ENCODE measurements at regions of chr11 and their contacts with region 1.

Region 1: GRCh38 chr11:33742249-33742851 is 6.1 kb upstream of the CD59 start:
- DNase-seq: no peak
- ATAC-seq: peak; percentile 87
- H3K4me3 ChIP-seq: no peak overlapping the region
- H3K27ac ChIP-seq: no peak overlapping the region
- H3K4me1 ChIP-seq: no peaks in the 10 kb centered on the region
- H3K27me3 ChIP-seq: no peaks in the 10 kb centered on the region
- CTCF ChIP-seq: peak; percentile 21 to 60 (median 38); a peak in 3 of 6 replicates
- EP300 ChIP-seq: no peak
- POLR2A ChIP-seq: no peak
- RAD21 ChIP-seq: 0 out of 2 replicates have a peak, but pooled peaks have one; percentile 40

Region 2: GRCh38 chr11:33362051-33362910 is 380.1 kb before region 1 on chr11:
- CTCF ChIA-PET with region 1: interaction called, 83 read pairs
- POLR2A ChIA-PET with region 1: interaction called, 3 read pairs
- RAD21 ChIA-PET with region 1: interaction called, 50 read pairs
- SMC1A ChIA-PET with region 1: interaction called, 41 read pairs
- in situ Hi-C with region 1: no loop called
- intact Hi-C with region 1: loop called (anchors 2 kb)
- DNase-seq: no peak
- ATAC-seq: peak; percentile 84
- H3K4me3 ChIP-seq: no peak overlapping the region
- H3K27ac ChIP-seq: no peak overlapping the region
- H3K4me1 ChIP-seq: no peaks in the 10 kb centered on the region
- H3K27me3 ChIP-seq: no peaks in the 10 kb centered on the region
- CTCF ChIP-seq: peak; percentile 39 to 63 (median 47); a peak in 4 of 6 replicates
- EP300 ChIP-seq: no peak
- POLR2A ChIP-seq: no peak
- RAD21 ChIP-seq: peak; percentile 76

Region 3: DNA sequence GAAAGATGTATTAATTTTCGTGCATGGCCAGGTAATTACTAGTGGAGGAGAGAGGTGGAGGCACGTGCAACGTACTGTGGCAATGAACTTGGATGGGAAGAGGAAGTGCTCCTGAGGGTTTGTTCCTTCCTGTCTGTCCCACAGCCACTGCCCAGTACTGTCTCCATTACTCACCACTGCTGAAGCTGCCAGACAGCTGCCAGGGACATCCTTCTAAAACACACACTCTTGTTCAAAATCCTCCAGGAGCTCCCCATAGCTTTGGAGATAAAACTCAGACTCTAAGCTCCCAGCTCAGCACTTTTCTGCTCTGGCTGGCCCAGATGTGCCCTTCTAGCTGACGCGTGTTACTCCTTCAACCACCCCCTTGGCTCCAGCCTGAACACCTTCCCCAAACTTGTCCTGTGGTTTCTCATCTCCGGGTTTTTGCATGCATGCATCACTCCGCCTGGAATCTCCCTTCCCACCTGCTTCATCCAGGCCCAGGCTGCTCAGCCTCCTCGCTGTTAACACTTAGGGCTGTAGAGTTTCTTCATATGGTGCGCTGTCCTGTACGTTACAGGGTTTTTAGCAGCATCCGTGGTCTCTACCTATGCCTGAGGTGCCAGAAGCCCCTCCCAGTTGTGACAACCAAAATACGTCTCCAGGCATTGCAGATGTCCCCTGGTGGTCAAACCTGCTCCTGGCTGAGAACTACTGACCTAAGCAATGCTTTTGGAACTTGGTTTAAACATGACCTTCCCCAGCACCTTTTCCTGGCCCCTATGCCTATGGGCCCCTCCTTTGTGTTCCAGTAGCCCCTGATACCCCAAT is 111.2 kb before region 1 on chr11:
- CTCF ChIA-PET with region 1: no interaction called
- POLR2A ChIA-PET with region 1: no interaction called
- RAD21 ChIA-PET with region 1: no interaction called
- SMC1A ChIA-PET with region 1: no interaction called
- in situ Hi-C with region 1: no loop called
- intact Hi-C with region 1: no loop called
- DNase-seq: no peak
- ATAC-seq: no peak
- H3K4me3 ChIP-seq: no peak overlapping the region
- H3K27ac ChIP-seq: no peak overlapping the region
- H3K4me1 ChIP-seq: peaks cover 4% of the 10 kb centered on the region; the same call in 1 of the 2 replicates
- H3K27me3 ChIP-seq: no peaks in the 10 kb centered on the region
- CTCF ChIP-seq: no peak
- EP300 ChIP-seq: no peak
- POLR2A ChIP-seq: no peak
- RAD21 ChIP-seq: no peak

Region 4: DNA sequence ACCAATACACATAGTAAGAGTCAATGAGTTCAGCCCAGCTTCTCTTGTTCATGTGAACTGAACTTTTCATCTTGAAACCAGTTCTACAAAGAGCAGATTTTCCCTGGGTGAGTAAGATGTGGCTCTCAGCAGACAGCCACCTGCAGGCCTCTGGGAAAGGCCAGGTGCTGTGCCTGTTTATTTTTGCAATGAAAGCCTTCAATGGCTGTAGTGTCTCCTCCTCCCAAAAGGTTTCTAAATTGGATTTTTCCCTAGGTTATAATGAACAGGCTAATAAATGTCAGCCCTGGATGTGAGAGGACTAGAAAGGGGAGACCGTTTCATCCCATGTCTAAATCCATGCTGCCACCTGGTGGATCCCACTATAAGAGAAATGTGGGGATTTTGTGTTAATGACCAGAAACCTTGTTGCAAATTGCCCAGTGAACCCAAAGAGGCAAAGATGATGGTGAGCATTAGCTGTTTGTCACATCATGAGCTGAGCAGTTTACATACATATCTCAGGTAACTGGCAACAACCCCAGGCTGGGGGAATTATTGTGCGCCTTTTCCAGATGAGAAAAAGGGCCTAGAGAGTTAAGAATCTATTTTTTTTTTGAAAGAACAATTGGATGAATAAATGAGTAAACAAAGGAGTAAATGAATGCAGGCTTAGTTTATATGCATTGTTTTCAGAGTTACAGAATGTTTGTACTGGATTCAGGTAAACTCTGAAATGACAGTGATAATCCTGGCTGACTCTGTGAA is 54.4 kb before region 1 on chr11:
- CTCF ChIA-PET with region 1: interaction called, 45 read pairs
- POLR2A ChIA-PET with region 1: no interaction called
- RAD21 ChIA-PET with region 1: interaction called, 15 read pairs
- SMC1A ChIA-PET with region 1: interaction called, 30 read pairs
- in situ Hi-C with region 1: no loop called
- intact Hi-C with region 1: no loop called
- DNase-seq: peak; percentile 33
- ATAC-seq: peak; percentile 74
- H3K4me3 ChIP-seq: no peak overlapping the region
- H3K27ac ChIP-seq: no peak overlapping the region; the same call in 1 of the 2 replicates
- H3K4me1 ChIP-seq: peaks cover 3% of the 10 kb centered on the region; the same call in 1 of the 2 replicates
- H3K27me3 ChIP-seq: no peaks in the 10 kb centered on the region
- CTCF ChIP-seq: peak; percentile 60 to 71 (median 62)
- EP300 ChIP-seq: no peak
- POLR2A ChIP-seq: no peak
- RAD21 ChIP-seq: peak; percentile 92

Region 5: DNA sequence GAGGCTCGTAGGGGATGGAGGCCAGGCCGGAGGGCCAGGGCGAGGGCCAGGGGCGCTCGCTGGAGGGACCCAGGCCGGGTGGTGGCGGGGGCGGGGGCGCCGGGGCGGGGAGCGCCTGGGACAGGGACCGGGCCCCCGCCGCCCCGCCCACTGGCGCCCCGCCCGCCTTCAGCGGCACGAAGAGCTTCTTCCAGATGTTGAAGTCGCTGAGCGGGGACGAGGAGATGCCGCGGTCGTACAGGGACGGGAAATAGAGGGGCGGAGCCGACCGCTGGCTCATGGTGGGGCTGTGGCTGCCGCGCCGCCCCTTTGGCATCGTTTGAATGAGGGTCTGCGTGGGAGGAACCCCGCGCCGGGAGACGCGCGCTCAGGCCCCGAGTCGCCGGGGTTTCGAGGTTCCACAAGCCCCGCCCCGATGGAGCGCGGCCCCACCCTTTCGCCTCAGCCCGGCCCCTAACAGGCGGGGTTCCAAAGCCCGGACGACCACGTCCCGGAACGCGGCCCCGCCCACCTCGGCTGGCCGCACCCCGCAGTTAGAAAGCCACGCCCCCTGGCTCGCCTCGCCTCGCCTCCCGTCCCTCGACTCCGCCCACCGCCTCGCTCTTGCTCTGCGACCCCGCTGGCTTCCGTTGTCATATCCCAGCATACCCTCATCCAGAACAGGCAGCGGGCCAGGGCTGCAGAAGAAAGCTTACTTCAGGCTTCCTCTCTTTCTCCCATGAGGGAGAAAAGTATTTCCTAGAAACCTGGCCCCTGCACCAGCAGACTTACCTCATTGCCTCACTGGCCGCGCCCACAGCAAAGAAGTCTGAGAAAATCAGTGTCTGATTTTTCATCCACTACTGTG is 41.7 kb before region 1 on chr11 and contains the start of gene C11orf91:
- CTCF ChIA-PET with region 1: interaction called, 35 read pairs
- POLR2A ChIA-PET with region 1: interaction called, 3 read pairs
- RAD21 ChIA-PET with region 1: interaction called, 17 read pairs
- SMC1A ChIA-PET with region 1: interaction called, 13 read pairs
- in situ Hi-C with region 1: no loop called
- intact Hi-C with region 1: loop called (anchors 5 kb)
- DNase-seq: peak; percentile 59
- ATAC-seq: peak; percentile 98
- H3K4me3 ChIP-seq: peak within 1 kb of the TSS; percentile 71
- H3K27ac ChIP-seq: no peak within 1 kb of the TSS
- H3K4me1 ChIP-seq: peaks cover 3% of the 10 kb centered on the region; the same call in 1 of the 2 replicates
- H3K27me3 ChIP-seq: no peaks in the 10 kb centered on the region
- CTCF ChIP-seq: no peak
- EP300 ChIP-seq: no peak
- POLR2A ChIP-seq: no peak; the same call in none of the 2 replicates
- RAD21 ChIP-seq: no peak
- polyA plus RNA-seq, gene C11orf91: not detected

Region 6: GRCh38 chr11:33722579-33723225 is 19.6 kb before region 1 on chr11:
- CTCF ChIA-PET with region 1: interaction called, 276 read pairs
- POLR2A ChIA-PET with region 1: no interaction called
- RAD21 ChIA-PET with region 1: interaction called, 158 read pairs
- SMC1A ChIA-PET with region 1: interaction called, 153 read pairs
- in situ Hi-C with region 1: no loop called
- intact Hi-C with region 1: no loop called
- DNase-seq: peak; percentile 34
- ATAC-seq: peak; percentile 90
- H3K4me3 ChIP-seq: no peak overlapping the region
- H3K27ac ChIP-seq: peak overlapping the region; percentile 62
- H3K4me1 ChIP-seq: peaks cover 24% of the 10 kb centered on the region
- H3K27me3 ChIP-seq: no peaks in the 10 kb centered on the region
- CTCF ChIP-seq: no peak
- EP300 ChIP-seq: no peak
- POLR2A ChIP-seq: no peak; the same call in 1 of the 2 replicates
- RAD21 ChIP-seq: no peak

Region 7: GRCh38 chr11:33773987-33774735 is 31.8 kb after region 1 on chr11 and contains the start of gene FBXO3:
- CTCF ChIA-PET with region 1: interaction called, 14 read pairs
- POLR2A ChIA-PET with region 1: interaction called, 3 read pairs
- RAD21 ChIA-PET with region 1: interaction called, 4 read pairs
- SMC1A ChIA-PET with region 1: interaction called, 5 read pairs
- in situ Hi-C with region 1: no loop called
- intact Hi-C with region 1: no loop called
- DNase-seq: no peak
- ATAC-seq: peak; percentile 88
- H3K4me3 ChIP-seq: peak within 1 kb of the TSS; percentile 96
- H3K27ac ChIP-seq: peak within 1 kb of the TSS; percentile 26; the same call in 1 of the 2 replicates
- H3K4me1 ChIP-seq: peaks cover 21% of the 10 kb centered on the region
- H3K27me3 ChIP-seq: no peaks in the 10 kb centered on the region
- CTCF ChIP-seq: no peak
- EP300 ChIP-seq: no peak
- POLR2A ChIP-seq: peak; percentile 85
- RAD21 ChIP-seq: no peak
- polyA plus RNA-seq, gene FBXO3: 12.4 to 27.1 TPM

Region 8: GRCh38 chr11:33857933-33858371 is 115.6 kb after region 1 on chr11:
- CTCF ChIA-PET with region 1: no interaction called
- POLR2A ChIA-PET with region 1: no interaction called
- RAD21 ChIA-PET with region 1: no interaction called
- SMC1A ChIA-PET with region 1: no interaction called
- in situ Hi-C with region 1: no loop called
- intact Hi-C with region 1: no loop called
- DNase-seq: peak; percentile 32
- ATAC-seq: peak; percentile 99
- H3K4me3 ChIP-seq: no peak overlapping the region
- H3K27ac ChIP-seq: no peak overlapping the region
- H3K4me1 ChIP-seq: no peaks in the 10 kb centered on the region
- H3K27me3 ChIP-seq: peaks cover 0 to 2% of the 10 kb centered on the region in 2 experiments; a peak in 1 of 4 replicates
- CTCF ChIP-seq: peak; percentile 85 to 94 (median 88); a peak in 5 of 6 replicates
- EP300 ChIP-seq: no peak
- POLR2A ChIP-seq: no peak
- RAD21 ChIP-seq: peak; percentile 100

Measured in GM12878 (cell line).